ENCODE measurements at regions of chr4 and their contacts with region 1.

Region 1: DNA sequence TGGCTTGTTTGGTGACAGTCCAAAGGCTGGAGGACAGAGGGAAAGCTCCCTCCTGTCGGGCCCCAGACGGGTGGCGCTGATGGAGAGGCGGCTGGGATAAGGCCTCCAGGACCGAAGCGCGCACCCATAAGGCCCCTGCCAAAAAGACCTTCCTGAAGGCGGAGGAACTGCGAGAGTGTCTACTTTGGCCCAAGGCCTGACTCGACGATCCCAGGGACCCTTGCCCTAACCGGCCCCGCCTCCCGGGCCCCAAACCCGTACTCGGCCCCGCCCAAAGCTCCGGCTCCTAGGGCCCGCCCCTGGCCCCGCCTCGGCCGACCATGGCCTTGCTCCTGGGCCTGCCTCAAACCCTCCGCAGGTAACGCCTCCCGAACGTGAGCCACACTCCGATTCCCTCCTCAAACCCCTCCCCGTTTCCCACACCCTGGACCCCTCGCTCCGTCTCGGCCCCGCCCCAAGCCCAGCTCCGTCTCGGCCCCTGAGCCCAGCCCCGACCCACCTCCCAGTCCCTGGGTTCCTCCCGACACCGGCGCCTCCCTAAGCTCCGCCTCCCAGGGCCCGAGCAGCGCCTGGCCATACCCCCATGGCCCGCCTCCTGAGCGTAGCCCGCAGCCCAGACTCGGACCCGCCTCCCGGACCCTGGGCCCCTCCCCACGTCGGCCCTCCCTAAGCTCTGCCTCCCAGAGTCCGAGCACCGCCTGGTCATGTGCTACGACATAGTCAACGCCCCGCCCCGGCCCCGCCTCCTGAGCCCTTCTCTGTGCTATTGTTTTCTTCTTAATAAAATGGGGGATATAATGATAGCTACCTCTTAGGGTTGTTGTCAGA is 90.0 kb upstream of the DRD5 start:
- DNase-seq: peak; percentile 99

Region 2: GRCh38 chr4:10018818-10019461 is 327.5 kb after region 1 on chr4:
- intact Hi-C with region 1: loop called in 1 of 2 experiments (anchors 10 kb)
- DNase-seq: peak; percentile 99

Measured in posterior vena cava (tissue), 2 donors.